Colonic mucosa (tissue), 4 donors: ENCODE measurements at regions of chr6 and their contacts with region 1.

Region 1: GRCh38 chr6:131199568-131200272 is 64.5 kb downstream of the AKAP7 start:
- DNase-seq: peak; percentile 51
- H3K4me3 ChIP-seq: no peak overlapping the region
- H3K27ac ChIP-seq: no peak overlapping the region
- H3K4me1 ChIP-seq: no peaks in the 10 kb centered on the region
- H3K27me3 ChIP-seq: no peaks in the 10 kb centered on the region
- CTCF ChIP-seq: peak; percentile 79

Region 2: GRCh38 chr6:131532580-131533039 is 332.9 kb after region 1 on chr6:
- intact Hi-C with region 1: loop called (anchors 5 kb)
- DNase-seq: no peak
- H3K4me3 ChIP-seq: no peak overlapping the region
- H3K27ac ChIP-seq: no peak overlapping the region
- H3K4me1 ChIP-seq: no peaks in the 10 kb centered on the region
- H3K27me3 ChIP-seq: no peaks in the 10 kb centered on the region
- CTCF ChIP-seq: no peak